ENCODE measurements at regions of chr6 and their contacts with region 1.

Region 1: GRCh38 chr6:43001843-43002242 is 11.9 kb downstream of the MEA1 start:
- DNase-seq: no peak
- H3K4me3 ChIP-seq: no peak overlapping the region
- H3K27ac ChIP-seq: no peak overlapping the region
- H3K4me1 ChIP-seq: no peaks in the 10 kb centered on the region
- CTCF ChIP-seq: no peak

Region 2: DNA sequence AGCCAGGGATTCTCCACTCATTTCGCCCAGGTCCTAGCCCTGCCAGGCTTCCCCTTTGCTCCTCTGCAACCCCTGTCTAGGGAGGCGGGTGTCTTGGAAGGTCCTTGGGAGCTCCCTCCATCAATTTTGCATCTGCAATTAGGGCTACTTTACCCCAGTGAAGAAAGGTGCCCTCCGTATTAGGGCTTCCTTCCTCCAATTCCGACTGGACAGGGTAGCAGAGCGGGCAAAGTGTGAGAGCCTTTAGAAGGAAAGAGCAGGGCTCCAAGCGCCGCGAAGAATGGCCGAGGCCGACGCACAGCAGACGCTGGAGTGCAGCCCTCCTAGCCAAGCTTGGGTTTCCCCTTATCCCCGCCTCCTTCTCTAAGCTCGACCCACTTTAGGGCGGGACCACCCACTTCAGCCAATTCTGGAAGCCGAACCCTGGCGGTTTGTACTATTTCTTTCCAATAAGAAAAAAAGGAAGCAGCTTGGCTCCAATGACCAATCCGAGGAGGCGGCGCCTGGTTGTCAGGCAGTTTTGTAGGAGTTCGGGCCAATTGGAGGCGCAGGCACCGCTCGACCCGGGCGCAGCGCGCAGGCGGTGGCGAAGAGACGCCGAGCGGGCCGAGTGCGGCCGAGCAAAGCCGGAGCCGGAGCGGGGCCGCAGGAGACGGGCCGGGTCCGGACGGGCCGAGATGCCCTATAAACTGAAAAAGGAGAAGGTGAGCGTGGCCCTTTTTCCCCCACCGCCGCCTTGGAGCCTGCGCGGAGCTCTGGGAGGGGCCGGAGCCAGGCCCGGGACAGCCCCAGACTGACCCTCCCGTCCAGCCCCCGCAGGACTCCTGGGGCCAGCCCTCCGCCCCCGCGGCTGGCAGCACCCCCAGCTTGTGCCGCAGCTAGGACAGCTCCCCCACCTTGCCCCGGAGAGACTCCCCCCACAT is 17.6 kb before region 1 on chr6 and contains the start of gene PPP2R5D:
- CTCF ChIA-PET with region 1: no interaction called
- POLR2A ChIA-PET with region 1: interaction called, 12 read pairs
- intact Hi-C with region 1: no loop called
- DNase-seq: peak; percentile 99
- H3K4me3 ChIP-seq: peak within 1 kb of the TSS; percentile 88
- H3K27ac ChIP-seq: peak within 1 kb of the TSS; percentile 35
- H3K4me1 ChIP-seq: peaks cover 24% of the 10 kb centered on the region
- CTCF ChIP-seq: no peak
- total RNA-seq, gene PPP2R5D: 29.1 and 35.0 TPM in 2 replicates

Measured in OCI-LY7 (cell line).